ENCODE measurements at regions of chr17 and their contacts with region 1.

Region 1: GRCh38 chr17:50177983-50178834 is 12.4 kb downstream of the SGCA start:
- DNase-seq: peak; percentile 68
- ATAC-seq: peak; percentile 76
- H3K4me3 Mint-ChIP-seq: peak overlapping the region; percentile 56
- H3K27ac Mint-ChIP-seq: peak overlapping the region; percentile 37; the same call in 1 of the 2 replicates
- H3K4me1 Mint-ChIP-seq: peaks cover 31% of the 10 kb centered on the region
- H3K27me3 Mint-ChIP-seq: peaks cover 6% of the 10 kb centered on the region; the same call in 1 of the 2 replicates
- CTCF ChIP-seq: no peak

Region 2: GRCh38 chr17:50129728-50130558 is 48.3 kb before region 1 on chr17 and contains the start of gene SAMD14:
- CTCF ChIA-PET with region 1: interaction called, 10 read pairs
- POLR2A ChIA-PET with region 1: no interaction called
- DNase-seq: no peak
- ATAC-seq: peak; percentile 16
- H3K4me3 Mint-ChIP-seq: peak within 1 kb of the TSS; percentile 97
- H3K27ac Mint-ChIP-seq: no peak within 1 kb of the TSS
- H3K4me1 Mint-ChIP-seq: peaks cover 48% of the 10 kb centered on the region
- H3K27me3 Mint-ChIP-seq: peaks cover 26% of the 10 kb centered on the region
- CTCF ChIP-seq: no peak
- total RNA-seq, gene SAMD14: 4.5 to 6.0 TPM (median 5.9 TPM) in 3 replicates

Region 3: DNA sequence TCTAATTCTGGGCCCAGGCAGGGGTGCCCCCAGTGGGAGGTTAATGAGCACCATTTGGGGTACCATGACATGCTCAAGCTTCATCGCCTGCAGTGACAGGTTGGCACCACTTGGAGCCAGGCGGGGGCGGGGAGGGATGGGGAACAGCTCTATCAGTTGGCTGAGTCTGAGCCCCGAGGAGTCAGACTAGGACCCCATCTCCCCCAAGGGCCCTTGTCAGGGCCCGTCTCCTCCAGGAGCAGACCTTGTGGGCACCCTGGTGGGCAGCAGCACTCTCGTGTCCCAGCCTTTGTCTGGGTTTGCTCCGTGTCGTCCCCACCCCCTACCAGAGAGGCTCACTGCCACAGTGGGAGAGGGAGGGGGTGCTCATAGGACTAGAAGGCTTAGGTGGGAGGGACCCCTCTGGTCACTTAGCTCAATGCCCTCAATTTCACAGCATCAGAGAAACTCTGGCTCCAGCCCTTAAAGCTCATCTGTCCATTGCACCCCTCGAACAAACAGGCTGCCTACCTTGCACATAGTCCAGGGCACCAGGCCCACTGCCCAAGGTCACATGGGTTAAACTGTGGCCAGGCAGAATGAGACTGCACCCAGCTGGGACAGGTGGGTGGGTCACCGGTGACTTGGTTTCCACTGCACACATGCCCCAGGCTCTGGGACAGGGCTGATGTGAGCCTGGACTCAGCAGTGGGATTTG is 31.8 kb before region 1 on chr17:
- CTCF ChIA-PET with region 1: no interaction called
- POLR2A ChIA-PET with region 1: no interaction called
- DNase-seq: no peak
- ATAC-seq: no peak
- H3K4me3 Mint-ChIP-seq: no peak overlapping the region
- H3K27ac Mint-ChIP-seq: no peak overlapping the region
- H3K4me1 Mint-ChIP-seq: peaks cover 32% of the 10 kb centered on the region
- H3K27me3 Mint-ChIP-seq: peaks cover 19% of the 10 kb centered on the region
- CTCF ChIP-seq: no peak

Region 4: DNA sequence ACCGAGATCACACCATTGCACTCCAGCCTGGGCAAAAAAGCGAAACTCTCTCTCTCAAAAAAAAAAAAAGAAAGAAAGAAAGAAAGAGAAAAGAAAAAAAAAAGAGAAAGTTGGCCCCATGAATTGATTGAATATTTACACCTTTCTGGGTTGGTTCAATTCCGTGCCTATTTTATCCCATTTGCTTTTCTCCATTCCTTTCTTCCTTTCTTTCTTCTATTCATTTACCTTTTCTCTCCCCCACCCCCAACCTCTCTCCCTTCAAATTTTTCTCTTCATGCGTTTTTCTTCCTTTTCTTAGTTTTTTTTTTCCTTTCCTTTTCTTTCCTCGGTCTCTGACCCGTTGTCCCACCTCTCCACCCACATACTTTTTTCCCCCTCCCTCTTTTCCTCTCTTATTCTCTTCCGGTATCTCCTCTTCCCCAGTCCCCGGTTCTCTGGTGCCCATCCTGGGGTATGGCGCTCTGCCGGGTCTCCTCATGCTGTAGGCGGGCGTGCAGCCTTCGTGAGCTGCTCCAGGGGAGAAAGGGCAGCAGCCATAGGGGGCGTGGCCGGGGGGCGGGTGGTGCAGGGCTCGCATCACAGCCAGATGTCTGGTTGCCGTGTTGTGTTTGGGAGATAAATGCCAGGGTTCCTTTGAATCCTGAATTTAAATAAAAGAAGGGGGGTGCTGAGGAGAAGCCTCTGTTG is 28.5 kb after region 1 on chr17:
- CTCF ChIA-PET with region 1: interaction called, 49 read pairs
- POLR2A ChIA-PET with region 1: interaction called, 3 read pairs
- DNase-seq: peak; percentile 81
- ATAC-seq: peak; percentile 54
- H3K4me3 Mint-ChIP-seq: peak overlapping the region; percentile 51
- H3K27ac Mint-ChIP-seq: no peak overlapping the region
- H3K4me1 Mint-ChIP-seq: peaks cover 66% of the 10 kb centered on the region
- H3K27me3 Mint-ChIP-seq: peaks cover 59% of the 10 kb centered on the region
- CTCF ChIP-seq: no peak

Region 5: DNA sequence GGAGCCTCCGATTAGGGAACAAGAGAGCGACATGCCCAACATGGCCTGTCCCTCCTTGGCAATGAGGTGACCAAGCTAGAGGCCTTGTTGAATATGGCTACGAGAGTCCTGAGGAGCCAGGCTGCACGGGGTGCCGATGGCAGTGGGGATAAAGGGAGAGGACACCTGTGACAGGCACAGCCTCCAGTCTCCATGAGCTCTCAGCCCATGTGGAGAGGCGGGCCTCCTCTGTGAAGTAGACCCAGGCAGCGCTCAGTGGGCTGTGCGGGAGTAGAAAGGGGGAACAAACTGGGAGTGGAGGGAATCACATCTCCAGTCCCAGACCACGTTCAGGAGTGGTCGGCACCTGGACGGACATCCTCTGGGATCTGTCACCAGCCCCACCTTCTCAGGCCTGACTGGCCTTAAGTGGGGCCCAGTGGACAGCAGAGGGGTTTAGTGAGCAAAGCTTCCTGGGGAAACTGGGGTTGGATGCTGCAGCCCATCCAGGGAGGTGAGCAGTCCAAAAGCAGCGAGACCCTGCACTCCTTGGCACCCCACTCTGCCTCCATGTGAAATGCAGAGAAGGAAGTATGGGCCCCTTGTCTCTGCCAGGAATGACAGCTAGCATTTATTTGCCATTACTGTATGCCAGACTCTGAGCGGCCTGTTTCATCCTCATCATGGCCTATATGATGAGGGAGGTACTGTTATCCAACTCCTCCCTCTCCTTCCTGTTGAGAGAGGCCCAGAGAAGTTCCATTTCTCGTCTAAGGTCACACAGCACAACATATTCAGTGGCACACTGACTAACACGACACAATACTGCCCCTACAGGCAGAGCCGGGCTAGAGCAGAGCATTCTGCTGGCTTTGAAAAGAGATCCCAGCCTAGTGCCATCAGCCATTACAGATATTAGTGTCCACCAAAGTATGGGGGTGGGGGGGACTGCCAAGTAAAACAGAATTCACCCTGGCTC is 91.5 kb after region 1 on chr17:
- CTCF ChIA-PET with region 1: interaction called, 22 read pairs
- POLR2A ChIA-PET with region 1: interaction called, 3 read pairs
- DNase-seq: peak; percentile 81
- ATAC-seq: peak; percentile 54
- H3K4me3 Mint-ChIP-seq: no peak overlapping the region
- H3K27ac Mint-ChIP-seq: no peak overlapping the region
- H3K4me1 Mint-ChIP-seq: peaks cover 38% of the 10 kb centered on the region
- H3K27me3 Mint-ChIP-seq: peaks cover 12% of the 10 kb centered on the region
- CTCF ChIP-seq: peak; percentile 61

Region 6: GRCh38 chr17:50331085-50331791 is 153.0 kb after region 1 on chr17:
- CTCF ChIA-PET with region 1: interaction called, 16 read pairs
- POLR2A ChIA-PET with region 1: no interaction called
- DNase-seq: no peak
- ATAC-seq: no peak
- H3K4me3 Mint-ChIP-seq: no peak overlapping the region
- H3K27ac Mint-ChIP-seq: no peak overlapping the region
- H3K4me1 Mint-ChIP-seq: peaks cover 17% of the 10 kb centered on the region
- H3K27me3 Mint-ChIP-seq: no peaks in the 10 kb centered on the region
- CTCF ChIP-seq: no peak

Measured in WTC11 (cell line).